ENCODE measurements at regions of chr14 and their contacts with region 1.

Region 1: DNA sequence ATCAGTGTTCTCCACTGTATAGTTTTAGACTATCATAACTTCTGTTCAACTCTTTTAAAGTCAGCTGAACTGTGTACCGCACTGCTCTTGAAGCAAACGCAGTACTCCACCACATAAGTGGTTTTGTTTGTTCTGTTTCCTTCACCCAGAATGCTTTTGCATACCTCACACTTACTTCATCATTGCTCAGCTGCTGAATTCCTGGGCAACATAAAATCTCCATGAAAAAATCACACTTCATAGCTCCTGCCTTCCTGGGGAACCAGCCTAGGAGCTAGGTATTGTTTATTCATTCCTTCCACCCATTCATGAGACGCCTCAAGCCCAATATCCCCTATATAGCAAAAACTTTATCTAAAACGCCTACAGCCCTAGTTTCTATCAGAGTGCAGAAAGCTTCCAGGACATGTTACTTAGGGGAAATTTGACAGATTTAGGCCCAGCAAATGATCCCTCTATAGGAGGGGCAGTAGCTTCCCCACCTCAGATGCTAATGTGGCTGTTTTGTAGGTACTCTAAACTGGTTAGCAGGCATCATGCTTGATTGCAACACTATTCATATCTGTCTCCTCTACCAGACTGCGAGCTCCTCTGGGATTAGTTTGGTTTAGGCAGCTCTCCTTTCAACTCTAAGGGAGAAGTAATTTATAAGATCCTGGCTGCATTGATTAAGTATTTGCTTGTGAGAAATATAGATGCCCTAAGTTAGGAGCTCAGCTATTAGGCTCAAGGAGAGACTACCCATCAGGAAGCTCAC is 44.5 kb downstream of the LRRC9 start:
- DNase-seq: peak; percentile 10
- H3K4me3 ChIP-seq: no peak overlapping the region
- H3K27ac ChIP-seq: no peak overlapping the region
- H3K27me3 ChIP-seq: no peaks in the 10 kb centered on the region
- CTCF ChIP-seq: no peak

Region 2: DNA sequence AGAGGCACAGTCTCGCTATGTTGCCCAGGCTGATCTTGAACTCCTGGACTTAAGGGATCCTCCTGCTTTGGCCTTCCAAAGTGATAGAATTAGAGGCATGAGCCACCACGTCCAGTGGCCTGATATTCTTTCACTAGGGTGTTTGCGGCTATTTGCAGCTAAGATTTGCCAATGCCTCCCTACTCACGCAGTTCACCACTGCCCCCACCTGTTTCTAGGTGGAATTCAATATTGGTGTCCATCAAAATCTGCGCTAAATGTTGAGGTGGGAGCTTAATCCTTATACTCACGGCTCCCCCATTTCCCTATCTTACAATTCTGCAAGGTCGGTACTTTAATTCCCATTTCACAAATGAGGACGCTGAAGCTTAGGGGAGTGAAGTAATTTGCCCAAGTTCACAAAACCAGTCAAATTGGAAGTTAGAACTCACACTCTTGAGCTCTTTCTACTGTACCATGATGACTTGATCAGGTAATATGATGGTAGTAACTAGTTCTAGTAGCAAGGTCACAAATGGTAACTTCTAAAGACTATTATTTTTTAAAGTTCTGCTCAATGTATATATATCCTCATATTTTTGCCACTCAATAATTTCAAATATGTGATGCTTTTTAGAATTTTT is 66.6 kb before region 1 on chr14:
- CTCF ChIA-PET with region 1: no interaction called
- POLR2A ChIA-PET with region 1: no interaction called
- DNase-seq: no peak
- H3K4me3 ChIP-seq: no peak overlapping the region
- H3K27ac ChIP-seq: no peak overlapping the region
- H3K27me3 ChIP-seq: peaks cover 2% of the 10 kb centered on the region
- CTCF ChIP-seq: 0 out of 2 replicates have a peak, but pooled peaks have one; percentile 20

Region 3: DNA sequence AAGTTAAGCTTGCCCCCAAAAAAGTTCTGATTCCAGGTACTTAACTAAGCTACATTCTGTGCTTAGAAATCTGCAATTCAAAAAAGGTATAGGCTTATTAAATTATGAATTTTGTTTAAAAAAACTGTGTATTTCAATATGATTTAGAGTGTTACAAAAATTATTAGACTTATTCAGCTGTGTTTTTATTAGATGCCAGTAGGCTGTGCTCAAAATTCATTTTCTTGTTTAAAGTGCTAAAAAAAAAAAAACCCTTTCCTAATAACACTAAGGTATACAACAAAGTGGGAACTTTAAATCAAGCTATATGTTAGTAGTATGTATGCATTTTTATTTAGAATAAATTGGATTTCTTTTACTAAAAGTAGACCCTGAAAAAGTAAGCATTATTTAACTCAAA is 19.5 kb before region 1 on chr14:
- CTCF ChIA-PET with region 1: interaction called, 25 read pairs
- POLR2A ChIA-PET with region 1: no interaction called
- DNase-seq: no peak
- H3K4me3 ChIP-seq: no peak overlapping the region
- H3K27ac ChIP-seq: no peak overlapping the region
- H3K27me3 ChIP-seq: no peaks in the 10 kb centered on the region
- CTCF ChIP-seq: no peak

Region 4: GRCh38 chr14:59986556-59987059 is 22.2 kb after region 1 on chr14:
- CTCF ChIA-PET with region 1: interaction called, 53 read pairs
- POLR2A ChIA-PET with region 1: no interaction called
- DNase-seq: no peak
- H3K4me3 ChIP-seq: no peak overlapping the region
- H3K27ac ChIP-seq: no peak overlapping the region
- H3K27me3 ChIP-seq: peaks cover 2% of the 10 kb centered on the region
- CTCF ChIP-seq: no peak

Region 5: GRCh38 chr14:60064491-60065072 is 100.2 kb after region 1 on chr14:
- CTCF ChIA-PET with region 1: interaction called, 17 read pairs
- POLR2A ChIA-PET with region 1: no interaction called
- DNase-seq: peak; percentile 3
- H3K4me3 ChIP-seq: no peak overlapping the region
- H3K27ac ChIP-seq: no peak overlapping the region
- H3K27me3 ChIP-seq: no peaks in the 10 kb centered on the region
- CTCF ChIP-seq: peak; percentile 67

Region 6: GRCh38 chr14:60184146-60184904 is 219.9 kb after region 1 on chr14:
- CTCF ChIA-PET with region 1: interaction called, 169 read pairs
- POLR2A ChIA-PET with region 1: no interaction called
- DNase-seq: peak; percentile 46
- H3K4me3 ChIP-seq: peak overlapping the region; percentile 47
- H3K27ac ChIP-seq: no peak overlapping the region
- H3K27me3 ChIP-seq: no peaks in the 10 kb centered on the region
- CTCF ChIP-seq: peak; percentile 68

Region 7: GRCh38 chr14:60248697-60249318 is 284.4 kb after region 1 on chr14 and contains the start of gene PPM1A:
- CTCF ChIA-PET with region 1: interaction called, 13 read pairs
- POLR2A ChIA-PET with region 1: interaction called, 5 read pairs
- DNase-seq: peak; percentile 88
- H3K4me3 ChIP-seq: peak within 1 kb of the TSS; percentile 74
- H3K27ac ChIP-seq: peak within 1 kb of the TSS; percentile 98
- H3K27me3 ChIP-seq: no peaks in the 10 kb centered on the region
- CTCF ChIP-seq: no peak
- polyA plus RNA-seq, gene PPM1A: 32.8 and 44.1 TPM in 2 replicates

Measured in AG04450 (cell line).